ENCODE measurements at regions of chr11 and their contacts with region 1.

Region 1: GRCh38 chr11:6377902-6378639 is 12.2 kb upstream of the SMPD1 start:
- DNase-seq: no peak
- ATAC-seq: peak; percentile 56
- H3K4me3 Mint-ChIP-seq: peak overlapping the region; percentile 42
- H3K27ac Mint-ChIP-seq: peak overlapping the region; percentile 81
- H3K4me1 Mint-ChIP-seq: peaks cover 20% of the 10 kb centered on the region
- H3K27me3 Mint-ChIP-seq: no peaks in the 10 kb centered on the region
- CTCF ChIP-seq: no peak

Region 2: DNA sequence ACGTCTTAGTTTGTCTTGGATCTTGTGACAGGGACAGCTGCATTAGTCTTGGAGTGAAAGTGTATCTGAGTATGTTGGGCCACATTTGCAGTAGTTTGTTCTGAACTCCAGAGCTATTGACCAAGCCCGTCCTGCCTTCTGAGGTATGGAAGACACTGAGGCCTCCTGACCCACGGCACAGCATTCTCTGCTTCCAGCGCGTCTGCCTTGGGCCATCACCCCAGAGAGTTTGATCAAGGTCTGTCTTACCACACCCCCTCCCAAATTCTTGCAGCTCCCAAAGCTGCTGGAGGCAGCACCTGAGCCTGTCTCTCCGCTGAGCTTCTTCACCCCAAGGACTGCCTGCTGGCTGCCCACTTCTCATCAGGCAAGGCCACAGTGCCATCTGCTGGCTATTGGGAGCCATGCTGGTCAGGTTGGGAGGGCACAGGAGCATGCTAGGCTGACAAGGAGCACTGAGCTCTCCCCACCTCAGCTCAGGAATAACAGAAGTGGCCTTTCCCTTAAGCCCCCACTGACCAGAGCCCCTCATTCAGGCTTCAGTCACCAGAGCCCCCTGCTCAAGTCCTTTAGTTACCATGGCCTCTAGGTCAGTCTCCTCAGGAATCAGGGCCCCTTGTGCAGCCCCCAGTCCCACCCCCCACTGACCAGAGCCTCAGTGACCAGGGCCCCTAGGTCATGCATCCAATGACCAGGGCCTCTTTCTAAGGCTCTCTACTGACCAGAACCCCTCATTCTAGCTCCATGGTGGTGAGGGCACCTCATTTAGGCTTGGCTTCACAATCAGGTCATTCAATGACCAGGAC is 15.0 kb before region 1 on chr11:
- CTCF ChIA-PET with region 1: interaction called, 19 read pairs
- POLR2A ChIA-PET with region 1: no interaction called
- intact Hi-C with region 1: no loop called
- DNase-seq: peak; percentile 26
- ATAC-seq: peak; percentile 82
- H3K4me3 Mint-ChIP-seq: no peak overlapping the region
- H3K27ac Mint-ChIP-seq: no peak overlapping the region
- H3K4me1 Mint-ChIP-seq: no peaks in the 10 kb centered on the region
- H3K27me3 Mint-ChIP-seq: no peaks in the 10 kb centered on the region
- CTCF ChIP-seq: no peak

Region 3: DNA sequence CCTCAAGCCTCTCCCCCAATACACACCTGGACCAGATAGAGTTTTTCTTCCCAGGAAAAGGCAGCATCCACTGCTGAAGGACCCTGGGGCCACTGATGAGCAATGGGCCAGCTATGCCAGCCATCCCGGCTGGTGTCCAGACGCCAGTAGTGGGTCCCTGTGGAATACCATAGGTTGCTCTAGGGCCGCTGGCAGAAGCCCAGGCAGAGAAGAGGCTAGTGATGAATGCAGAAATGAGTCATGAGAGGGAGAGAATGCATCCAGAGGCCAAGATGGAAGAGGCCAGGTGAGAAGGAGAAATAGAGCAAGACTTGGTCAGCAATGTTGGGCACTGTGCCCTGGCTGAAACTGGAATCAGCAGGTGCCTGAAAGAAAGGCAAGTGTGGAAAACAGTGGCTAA is 53.8 kb after region 1 on chr11:
- CTCF ChIA-PET with region 1: interaction called, 11 read pairs
- POLR2A ChIA-PET with region 1: no interaction called
- intact Hi-C with region 1: no loop called
- DNase-seq: no peak
- ATAC-seq: no peak
- H3K4me3 Mint-ChIP-seq: no peak overlapping the region
- H3K27ac Mint-ChIP-seq: no peak overlapping the region
- H3K4me1 Mint-ChIP-seq: peaks cover 3% of the 10 kb centered on the region
- H3K27me3 Mint-ChIP-seq: no peaks in the 10 kb centered on the region
- CTCF ChIP-seq: no peak

Region 4: DNA sequence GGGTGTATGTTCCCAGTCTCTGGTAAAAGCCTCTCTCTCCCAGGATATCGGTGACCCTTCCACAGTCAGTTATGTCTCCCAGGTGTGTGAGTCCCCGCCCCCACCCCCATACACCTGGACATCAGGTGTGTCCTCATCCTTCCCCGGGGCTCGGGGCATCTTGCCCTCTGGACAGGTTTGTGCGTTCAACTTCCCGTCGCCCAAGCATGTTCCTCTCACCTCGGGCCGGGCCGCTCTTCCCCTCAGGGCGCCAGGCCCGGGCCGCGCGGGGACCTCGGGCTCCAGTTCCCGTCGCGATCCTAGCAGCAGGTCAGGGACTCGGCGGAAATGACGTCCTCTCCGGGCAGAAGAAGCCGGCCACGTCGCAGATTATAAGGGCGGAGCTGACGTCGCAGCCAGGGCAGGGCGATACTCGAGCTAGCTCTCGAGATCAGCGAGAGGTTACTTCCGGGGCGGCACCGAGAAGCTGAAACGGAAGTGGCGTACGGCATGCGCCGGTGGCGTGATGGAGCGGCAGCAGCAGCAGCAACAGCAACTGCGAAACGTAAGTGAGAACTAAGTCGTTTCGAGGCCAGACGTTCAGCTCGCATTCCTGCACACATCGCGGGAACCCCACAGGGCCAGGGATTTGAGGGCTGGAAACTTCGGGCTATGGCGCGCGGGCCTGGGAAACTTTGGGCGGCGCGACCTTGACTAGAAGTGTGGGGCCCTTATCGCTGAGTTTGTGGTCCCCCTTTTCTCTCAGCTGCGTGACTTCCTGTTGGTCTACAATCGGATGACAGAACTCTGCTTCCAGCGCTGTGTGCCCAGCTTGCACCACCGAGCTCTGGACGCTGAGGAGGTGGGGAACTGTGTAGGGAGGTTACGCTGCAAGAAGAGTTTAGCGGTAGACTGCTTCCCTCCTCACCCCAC is 103.2 kb after region 1 on chr11 and contains the starts of genes ARFIP2 and TIMM10B:
- CTCF ChIA-PET with region 1: interaction called, 9 read pairs
- POLR2A ChIA-PET with region 1: interaction called, 11 read pairs
- intact Hi-C with region 1: no loop called
- DNase-seq: peak; percentile 92
- ATAC-seq: peak; percentile 95
- H3K4me3 Mint-ChIP-seq: peak within 1 kb of the TSS; percentile 95
- H3K27ac Mint-ChIP-seq: peak within 1 kb of the TSS; percentile 97
- H3K4me1 Mint-ChIP-seq: peaks cover 42% of the 10 kb centered on the region
- H3K27me3 Mint-ChIP-seq: no peaks in the 10 kb centered on the region
- CTCF ChIP-seq: no peak
- total RNA-seq, gene ARFIP2: 40.6 and 43.1 TPM in 2 replicates
- total RNA-seq, gene TIMM10B: 48.0 and 60.0 TPM in 2 replicates

Region 5: GRCh38 chr11:6531267-6531752 is 153.2 kb after region 1 on chr11:
- CTCF ChIA-PET with region 1: interaction called, 16 read pairs
- POLR2A ChIA-PET with region 1: interaction called, 5 read pairs
- intact Hi-C with region 1: no loop called
- DNase-seq: no peak
- ATAC-seq: peak; percentile 60
- H3K4me3 Mint-ChIP-seq: no peak overlapping the region
- H3K27ac Mint-ChIP-seq: no peak overlapping the region
- H3K4me1 Mint-ChIP-seq: peaks cover 6% of the 10 kb centered on the region
- H3K27me3 Mint-ChIP-seq: no peaks in the 10 kb centered on the region
- CTCF ChIP-seq: peak; percentile 35

Region 6: DNA sequence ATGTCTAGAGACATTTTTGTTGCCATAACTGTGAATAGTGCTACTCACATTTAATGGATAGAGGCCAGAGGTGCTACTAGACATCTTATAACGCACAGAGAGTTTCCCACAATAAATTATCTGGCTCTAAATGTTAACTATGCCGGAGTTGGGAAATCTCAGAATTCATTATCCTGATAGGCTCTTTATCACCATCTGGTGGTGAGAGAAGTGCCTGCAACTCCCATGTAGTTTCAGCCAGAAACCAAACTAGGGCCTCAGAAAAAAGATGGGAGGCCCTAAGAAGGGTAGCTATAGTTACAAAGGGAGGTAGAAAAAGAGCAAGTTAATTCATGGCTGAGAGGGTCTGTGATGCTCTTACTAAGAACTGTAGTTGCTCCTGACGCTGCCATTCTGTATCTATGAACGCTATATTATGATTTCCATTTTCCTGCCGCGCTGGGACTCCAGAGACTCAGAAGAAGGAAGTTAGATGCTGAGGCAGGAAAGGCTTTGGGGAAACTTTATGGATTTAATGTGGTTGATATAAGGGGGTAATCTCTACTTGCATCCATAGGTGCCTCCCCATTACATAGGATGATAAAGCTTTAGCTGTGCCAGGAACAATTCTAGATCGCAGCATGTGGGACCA is 327.9 kb after region 1 on chr11:
- CTCF ChIA-PET with region 1: interaction called, 23 read pairs
- POLR2A ChIA-PET with region 1: no interaction called
- intact Hi-C with region 1: loop called (anchors 1 kb)
- DNase-seq: no peak
- ATAC-seq: peak; percentile 66
- H3K4me3 Mint-ChIP-seq: no peak overlapping the region
- H3K27ac Mint-ChIP-seq: peak overlapping the region; percentile 60
- H3K4me1 Mint-ChIP-seq: peaks cover 19% of the 10 kb centered on the region
- H3K27me3 Mint-ChIP-seq: no peaks in the 10 kb centered on the region
- CTCF ChIP-seq: peak; percentile 92

Measured in activated B cell treated with CpG ODN at 0.5 μM for 24 hours (primary cell).